IMR-90 (cell line): ENCODE measurements at regions of chr7 and their contacts with region 1.

Region 1: DNA sequence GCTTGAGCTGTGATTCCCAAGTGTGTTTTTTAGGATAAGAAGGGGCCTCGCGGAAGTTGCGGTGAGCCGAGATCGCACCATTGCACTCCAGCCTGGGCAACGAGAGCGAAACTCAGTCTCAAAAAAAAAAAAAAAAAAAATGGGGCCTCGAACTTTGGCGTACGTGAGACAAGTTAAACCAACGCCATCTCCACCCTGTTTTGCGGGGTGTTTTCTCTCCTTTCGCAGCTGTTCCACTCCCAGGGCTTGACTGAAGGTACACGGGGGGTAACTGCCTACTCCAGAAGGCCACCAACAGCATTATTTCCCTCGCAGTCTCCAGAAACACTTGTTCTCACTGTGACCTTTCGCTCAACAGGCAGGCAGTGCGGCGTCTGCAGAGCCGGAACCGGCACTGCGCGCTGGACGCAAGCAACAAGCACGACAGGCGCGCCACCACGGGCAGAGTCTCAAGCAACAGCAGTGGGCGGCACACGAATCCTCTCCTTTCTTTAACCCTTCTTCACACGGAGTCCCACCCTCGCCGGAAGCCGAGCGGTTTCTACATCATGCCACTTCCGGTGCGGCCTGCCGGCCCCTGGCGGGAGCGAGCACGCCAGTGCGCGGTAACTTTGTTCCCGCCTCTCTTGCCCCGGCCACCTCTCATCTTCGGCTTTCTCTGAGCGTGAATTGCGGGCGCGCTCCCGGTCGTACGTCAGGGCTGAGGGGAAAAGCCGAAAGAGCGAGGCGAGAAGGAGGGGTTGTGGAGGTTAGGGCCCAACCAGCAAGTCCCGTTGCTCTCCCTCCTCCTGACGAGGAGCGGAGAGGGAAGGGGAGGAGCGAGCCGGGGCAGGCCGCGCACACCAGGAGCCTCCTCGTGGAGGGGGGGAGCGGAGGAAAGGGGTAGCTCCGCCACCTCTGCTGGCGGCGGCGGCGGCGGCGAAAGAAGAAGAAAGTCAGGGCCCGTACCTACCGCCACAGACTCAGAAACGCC is 814 bp upstream of the CDK13 start:
- DNase-seq: peak; percentile 100
- ATAC-seq: peak; percentile 90
- H3K4me3 ChIP-seq: peak overlapping the region; percentile 90
- H3K27ac ChIP-seq: peak overlapping the region; percentile 91
- H3K4me1 ChIP-seq: peaks cover 4% of the 10 kb centered on the region; the same call in 1 of the 2 replicates
- H3K27me3 ChIP-seq: no peaks in the 10 kb centered on the region
- CTCF ChIP-seq: no peak; the same call in 1 of the 2 replicates
- POLR2A ChIP-seq: peak; percentile 90
- RAD21 ChIP-seq: no peak

Region 2: DNA sequence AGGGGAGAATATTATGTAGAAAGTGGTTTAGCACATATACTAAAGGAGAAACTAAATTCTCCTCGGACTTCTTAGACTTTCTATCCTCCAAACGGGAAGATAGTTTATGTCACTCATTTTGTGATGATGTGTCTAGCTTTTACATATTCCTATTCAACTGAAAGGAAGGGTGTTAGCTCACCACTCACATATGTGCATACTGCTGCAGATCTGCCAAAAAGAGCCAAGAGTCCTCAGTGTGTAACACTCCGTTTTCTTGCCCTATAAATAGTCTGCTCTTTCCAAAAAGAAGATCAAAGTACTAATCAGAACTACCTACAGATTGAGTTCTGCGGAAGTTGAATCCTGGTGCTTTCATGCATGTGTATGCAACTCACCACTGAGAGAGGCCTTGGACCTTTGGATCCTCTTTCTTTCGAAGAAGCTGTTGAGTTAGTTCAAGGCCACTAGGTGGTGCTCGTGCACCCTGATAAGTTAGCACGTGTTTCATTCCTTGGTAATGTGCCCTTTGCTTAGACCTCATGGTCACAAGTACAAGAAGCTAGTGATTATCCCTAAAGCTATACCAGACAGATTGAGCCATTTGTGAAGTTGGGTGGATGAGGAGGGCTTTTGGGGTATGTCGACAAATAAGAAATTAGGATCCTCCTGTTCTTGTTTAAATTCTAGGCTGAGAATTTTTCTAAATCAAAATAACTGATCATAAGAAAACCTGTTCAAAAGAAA is 368.9 kb before region 1 on chr7:
- CTCF ChIA-PET with region 1: no interaction called
- POLR2A ChIA-PET with region 1: no interaction called
- dilution Hi-C with region 1: no loop called
- in situ Hi-C with region 1: no loop called
- intact Hi-C with region 1: loop called (anchors 2 kb)
- DNase-seq: peak; percentile 97
- ATAC-seq: peak; percentile 98
- H3K4me3 ChIP-seq: no peak overlapping the region
- H3K27ac ChIP-seq: no peak overlapping the region
- H3K4me1 ChIP-seq: no peaks in the 10 kb centered on the region
- H3K27me3 ChIP-seq: no peaks in the 10 kb centered on the region
- CTCF ChIP-seq: peak; percentile 90
- POLR2A ChIP-seq: peak; percentile 38; the same call in 1 of the 2 replicates
- RAD21 ChIP-seq: peak; percentile 98

Region 3: DNA sequence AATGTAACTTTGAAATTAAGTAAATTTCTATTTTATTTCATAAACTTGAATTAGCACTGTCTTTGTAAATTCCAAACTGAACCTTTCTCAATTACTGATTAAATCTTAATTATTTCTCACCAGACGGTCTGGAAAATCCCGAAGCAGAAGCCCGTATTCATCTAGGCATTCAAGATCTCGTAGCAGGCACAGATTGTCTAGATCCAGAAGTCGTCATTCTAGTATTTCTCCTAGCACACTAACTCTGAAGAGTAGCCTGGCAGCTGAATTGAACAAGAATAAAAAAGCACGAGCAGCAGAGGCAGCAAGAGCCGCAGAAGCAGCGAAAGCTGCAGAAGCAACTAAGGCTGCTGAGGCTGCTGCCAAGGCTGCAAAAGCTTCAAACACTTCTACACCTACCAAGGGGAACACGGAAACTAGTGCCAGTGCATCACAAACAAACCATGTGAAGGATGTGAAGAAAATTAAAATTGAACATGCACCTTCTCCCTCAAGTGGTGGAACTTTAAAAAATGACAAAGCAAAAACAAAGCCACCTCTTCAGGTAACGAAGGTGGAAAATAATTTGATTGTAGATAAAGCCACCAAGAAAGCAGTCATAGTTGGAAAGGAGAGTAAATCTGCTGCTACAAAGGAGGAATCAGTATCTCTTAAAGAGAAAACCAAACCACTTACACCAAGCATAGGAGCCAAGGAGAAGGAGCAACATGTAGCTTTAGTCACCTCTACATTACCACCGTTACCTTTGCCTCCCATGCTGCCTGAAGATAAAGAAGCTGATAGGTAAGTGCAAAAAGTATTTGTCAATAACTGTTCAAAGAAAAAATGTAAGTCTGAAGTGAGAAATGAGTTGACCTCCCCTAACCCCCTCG is 38.5 kb after region 1 on chr7:
- CTCF ChIA-PET with region 1: no interaction called
- POLR2A ChIA-PET with region 1: no interaction called
- dilution Hi-C with region 1: no loop called
- in situ Hi-C with region 1: no loop called
- intact Hi-C with region 1: loop called (anchors 5 kb)
- DNase-seq: no peak
- ATAC-seq: no peak
- H3K4me3 ChIP-seq: no peak overlapping the region
- H3K27ac ChIP-seq: no peak overlapping the region
- H3K4me1 ChIP-seq: peaks cover 2% of the 10 kb centered on the region
- H3K27me3 ChIP-seq: no peaks in the 10 kb centered on the region
- CTCF ChIP-seq: no peak
- POLR2A ChIP-seq: no peak
- RAD21 ChIP-seq: no peak

Region 4: GRCh38 chr7:40041456-40041855 is 92.2 kb after region 1 on chr7:
- CTCF ChIA-PET with region 1: no interaction called
- POLR2A ChIA-PET with region 1: interaction called, 15 read pairs
- dilution Hi-C with region 1: no loop called
- in situ Hi-C with region 1: no loop called
- intact Hi-C with region 1: no loop called
- DNase-seq: no peak
- ATAC-seq: no peak
- H3K4me3 ChIP-seq: no peak overlapping the region
- H3K27ac ChIP-seq: no peak overlapping the region
- H3K4me1 ChIP-seq: no peaks in the 10 kb centered on the region
- H3K27me3 ChIP-seq: no peaks in the 10 kb centered on the region
- CTCF ChIP-seq: no peak
- POLR2A ChIP-seq: no peak
- RAD21 ChIP-seq: no peak

Region 5: DNA sequence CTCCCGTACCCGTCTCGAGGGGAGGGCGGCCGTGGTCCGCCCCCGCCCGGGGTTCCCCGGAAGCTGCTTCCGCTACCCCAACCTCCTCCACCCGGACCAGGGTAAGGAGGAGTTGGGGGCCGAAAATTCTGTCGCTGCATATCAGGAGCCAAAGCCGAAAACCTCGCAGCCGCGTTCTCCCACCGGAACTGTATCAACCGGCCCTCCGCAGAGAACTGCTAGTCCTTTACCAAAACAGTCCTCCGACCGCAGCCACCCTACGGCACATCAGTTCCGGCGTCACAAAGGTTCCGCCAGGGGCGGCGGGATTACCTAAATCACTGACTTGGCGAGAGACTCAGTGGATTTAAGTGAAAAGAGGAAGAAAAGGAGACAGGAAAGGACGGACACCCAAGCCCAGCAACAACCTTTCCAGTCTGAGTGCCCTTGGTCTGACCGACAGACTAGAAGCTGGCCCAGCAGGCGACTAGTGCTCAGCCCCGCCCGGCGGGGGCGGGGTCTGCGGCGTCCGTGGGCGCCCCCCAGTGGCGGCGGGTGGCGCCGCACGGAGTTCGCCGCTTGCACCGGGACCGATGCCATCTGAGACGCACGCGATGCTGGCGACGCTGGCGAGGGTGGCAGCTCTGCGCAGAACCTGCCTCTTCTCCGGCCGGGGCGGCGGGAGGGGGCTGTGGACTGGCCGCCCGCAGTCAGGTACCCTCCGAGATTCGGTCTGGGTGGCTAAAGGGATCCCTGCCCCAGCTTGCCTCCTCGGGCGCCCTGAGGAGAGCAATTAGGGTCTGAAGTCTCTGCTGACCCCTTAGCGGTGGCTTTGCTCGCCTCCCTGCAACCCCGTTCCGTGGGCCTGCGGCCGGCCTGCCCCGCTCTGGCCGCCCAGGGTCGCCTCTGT is 185.4 kb after region 1 on chr7 and contains the starts of genes MPLKIP and SUGCT:
- CTCF ChIA-PET with region 1: interaction called, 3 read pairs
- POLR2A ChIA-PET with region 1: no interaction called
- dilution Hi-C with region 1: no loop called
- in situ Hi-C with region 1: no loop called
- intact Hi-C with region 1: loop called (anchors 1 kb)
- DNase-seq: peak; percentile 87
- ATAC-seq: peak; percentile 94
- H3K4me3 ChIP-seq: peak within 1 kb of the TSS; percentile 87
- H3K27ac ChIP-seq: peak within 1 kb of the TSS; percentile 87
- H3K4me1 ChIP-seq: no peaks in the 10 kb centered on the region
- H3K27me3 ChIP-seq: no peaks in the 10 kb centered on the region
- CTCF ChIP-seq: peak; percentile 97
- POLR2A ChIP-seq: peak; percentile 59; the same call in 1 of the 2 replicates
- RAD21 ChIP-seq: peak; percentile 41; the same call in 1 of the 2 replicates
- total RNA-seq, gene MPLKIP: 12.7 and 13.9 TPM in 2 replicates
- total RNA-seq, gene SUGCT: 5.9 and 7.5 TPM in 2 replicates

Region 6: GRCh38 chr7:40866604-40867003 is 917.4 kb after region 1 on chr7:
- CTCF ChIA-PET with region 1: no interaction called
- POLR2A ChIA-PET with region 1: no interaction called
- dilution Hi-C with region 1: no loop called
- in situ Hi-C with region 1: no loop called
- intact Hi-C with region 1: no loop called
- DNase-seq: no peak
- ATAC-seq: no peak
- H3K4me3 ChIP-seq: no peak overlapping the region
- H3K27ac ChIP-seq: no peak overlapping the region
- H3K4me1 ChIP-seq: peaks cover 3% of the 10 kb centered on the region; the same call in 1 of the 2 replicates
- H3K27me3 ChIP-seq: no peaks in the 10 kb centered on the region
- CTCF ChIP-seq: no peak
- POLR2A ChIP-seq: no peak
- RAD21 ChIP-seq: no peak